Calu3 (cell line): ENCODE measurements at regions of chr3 and their contacts with region 1.

Region 1: GRCh38 chr3:32143849-32144757 is 37.7 kb downstream of the GPD1L start:
- DNase-seq: peak; percentile 76
- H3K4me3 Mint-ChIP-seq: no peak overlapping the region
- H3K27ac Mint-ChIP-seq: no peak overlapping the region
- H3K4me1 Mint-ChIP-seq: peaks cover 29% of the 10 kb centered on the region
- H3K27me3 Mint-ChIP-seq: no peaks in the 10 kb centered on the region
- CTCF ChIP-seq: peak; percentile 47

Region 2: GRCh38 chr3:31858439-31858838 is 285.7 kb before region 1 on chr3:
- CTCF ChIA-PET with region 1: no interaction called
- intact Hi-C with region 1: loop called (anchors 10 kb)
- DNase-seq: peak; percentile 15
- H3K4me3 Mint-ChIP-seq: no peak overlapping the region
- H3K27ac Mint-ChIP-seq: no peak overlapping the region
- H3K4me1 Mint-ChIP-seq: peaks cover 8% of the 10 kb centered on the region
- H3K27me3 Mint-ChIP-seq: no peaks in the 10 kb centered on the region
- CTCF ChIP-seq: no peak

Region 3: GRCh38 chr3:32018757-32019564 is 125.1 kb before region 1 on chr3:
- CTCF ChIA-PET with region 1: interaction called, 12 read pairs
- intact Hi-C with region 1: loop called (anchors 1 kb)
- DNase-seq: peak; percentile 10
- H3K4me3 Mint-ChIP-seq: no peak overlapping the region
- H3K27ac Mint-ChIP-seq: no peak overlapping the region
- H3K4me1 Mint-ChIP-seq: peaks cover 14% of the 10 kb centered on the region
- H3K27me3 Mint-ChIP-seq: no peaks in the 10 kb centered on the region
- CTCF ChIP-seq: peak; percentile 45

Region 4: GRCh38 chr3:32037929-32038267 is 106.2 kb before region 1 on chr3:
- CTCF ChIA-PET with region 1: no interaction called
- intact Hi-C with region 1: no loop called
- DNase-seq: no peak
- H3K4me3 Mint-ChIP-seq: no peak overlapping the region
- H3K27ac Mint-ChIP-seq: no peak overlapping the region
- H3K4me1 Mint-ChIP-seq: no peaks in the 10 kb centered on the region
- H3K27me3 Mint-ChIP-seq: no peaks in the 10 kb centered on the region
- CTCF ChIP-seq: no peak

Region 5: GRCh38 chr3:32467333-32468070 is 323.4 kb after region 1 on chr3:
- CTCF ChIA-PET with region 1: no interaction called
- intact Hi-C with region 1: no loop called
- DNase-seq: peak; percentile 83
- H3K4me3 Mint-ChIP-seq: no peak overlapping the region
- H3K27ac Mint-ChIP-seq: no peak overlapping the region
- H3K4me1 Mint-ChIP-seq: peaks cover 33% of the 10 kb centered on the region
- H3K27me3 Mint-ChIP-seq: no peaks in the 10 kb centered on the region
- CTCF ChIP-seq: peak; percentile 97